GM12878 (cell line): ENCODE measurements at regions of chr6 and their contacts with region 1.

Region 1: DNA sequence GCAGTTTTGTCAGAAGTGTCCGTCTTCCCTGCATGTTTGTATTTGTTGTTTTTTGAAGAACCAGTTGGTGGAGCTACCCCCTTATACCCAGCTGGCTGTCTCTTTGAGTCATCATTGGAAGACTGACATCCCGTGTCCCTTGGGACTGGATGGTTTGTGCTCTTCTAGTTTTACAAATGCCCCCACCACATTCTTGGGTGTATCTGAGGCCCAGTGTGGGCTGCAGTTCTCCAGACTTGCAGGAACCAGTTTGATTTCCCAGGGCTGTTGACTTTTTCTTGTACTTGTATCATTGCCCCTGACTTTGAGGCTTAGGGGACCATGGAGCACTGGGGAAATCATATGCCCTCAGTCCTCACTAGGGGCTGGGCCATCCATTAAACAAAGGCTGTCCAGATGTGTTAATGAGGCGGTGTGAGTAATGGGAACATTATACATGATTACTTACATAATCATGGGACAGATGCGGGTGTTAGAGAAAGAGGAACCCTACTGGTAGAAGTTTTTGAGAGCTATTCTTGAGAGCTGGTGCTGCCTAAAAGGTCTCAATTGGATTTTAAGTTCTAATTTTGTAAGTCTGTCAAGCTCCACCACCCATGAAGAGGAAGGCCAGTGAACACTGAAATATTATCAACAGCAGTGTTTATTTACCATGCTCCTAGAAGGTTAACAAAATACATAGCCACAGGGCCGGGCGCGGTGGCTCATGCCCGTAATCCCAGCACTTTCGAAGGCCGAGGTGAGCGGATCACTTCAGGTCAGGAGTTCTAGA is 8.4 kb downstream of the JARID2 start:
- DNase-seq: peak; percentile 82
- ATAC-seq: peak; percentile 50
- H3K4me3 ChIP-seq: peak overlapping the region; percentile 42; the same call in 1 of the 2 replicates
- H3K27ac ChIP-seq: peak overlapping the region; percentile 92
- H3K4me1 ChIP-seq: peaks cover 78% of the 10 kb centered on the region
- H3K27me3 ChIP-seq: no peaks in the 10 kb centered on the region
- CTCF ChIP-seq: peak; percentile 40 to 65 (median 50); a peak in 5 of 6 replicates
- EP300 ChIP-seq: peak in 1 of 2 experiments; percentile 27; a peak in 1 of 4 replicates
- POLR2A ChIP-seq: no peak
- RAD21 ChIP-seq: peak; percentile 71

Region 2: DNA sequence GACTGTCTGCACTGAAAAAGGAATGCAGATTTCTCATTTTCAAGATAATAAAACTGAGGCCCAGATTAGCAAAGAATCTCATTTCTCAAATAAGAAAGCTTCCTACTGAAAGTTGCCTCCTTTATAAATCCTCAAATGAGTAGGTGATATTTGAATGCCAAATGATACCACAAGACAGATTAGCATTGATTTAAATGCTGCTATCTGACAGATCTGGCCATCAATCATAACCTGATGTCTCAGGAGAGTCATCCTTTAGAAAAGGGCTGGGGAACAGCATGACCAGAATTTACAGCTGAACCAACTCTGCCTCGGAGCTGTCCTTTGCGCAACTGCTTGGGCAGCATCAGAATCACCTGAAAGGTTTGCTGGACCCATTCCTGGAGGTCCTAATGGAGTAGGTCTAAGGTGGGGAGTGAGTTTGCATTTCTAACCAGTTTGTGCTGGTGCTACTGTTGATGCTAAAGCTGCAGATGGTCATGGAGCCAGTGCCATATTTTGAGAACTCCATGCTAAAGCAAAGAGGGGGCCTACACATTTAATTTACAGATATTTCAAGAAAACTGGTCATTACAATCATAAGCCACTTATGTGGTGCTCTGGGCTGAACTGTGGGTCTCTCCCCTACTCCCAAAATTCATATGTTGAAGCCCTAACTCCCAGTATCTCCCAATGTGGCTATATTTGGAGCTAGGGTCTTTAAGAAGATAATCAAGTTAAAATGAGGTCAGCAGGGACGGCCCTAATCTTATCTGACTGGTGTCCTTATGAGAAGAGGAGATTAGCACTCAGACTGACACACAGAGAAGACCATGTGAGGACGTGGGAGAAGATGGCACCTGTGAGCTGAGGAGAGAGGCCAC is 303.9 kb before region 1 on chr6:
- CTCF ChIA-PET with region 1: no interaction called
- POLR2A ChIA-PET with region 1: no interaction called
- RAD21 ChIA-PET with region 1: no interaction called
- SMC1A ChIA-PET with region 1: no interaction called
- in situ Hi-C with region 1: no loop called
- intact Hi-C with region 1: no loop called
- DNase-seq: no peak
- ATAC-seq: no peak
- H3K4me3 ChIP-seq: no peak overlapping the region
- H3K27ac ChIP-seq: no peak overlapping the region
- H3K4me1 ChIP-seq: peaks cover 4% of the 10 kb centered on the region
- H3K27me3 ChIP-seq: no peaks in the 10 kb centered on the region
- CTCF ChIP-seq: no peak
- EP300 ChIP-seq: no peak
- POLR2A ChIP-seq: no peak
- RAD21 ChIP-seq: no peak

Region 3: GRCh38 chr6:15218401-15218800 is 35.9 kb before region 1 on chr6:
- CTCF ChIA-PET with region 1: no interaction called
- POLR2A ChIA-PET with region 1: no interaction called
- RAD21 ChIA-PET with region 1: no interaction called
- SMC1A ChIA-PET with region 1: no interaction called
- in situ Hi-C with region 1: no loop called
- intact Hi-C with region 1: no loop called
- DNase-seq: no peak
- ATAC-seq: no peak
- H3K4me3 ChIP-seq: no peak overlapping the region
- H3K27ac ChIP-seq: no peak overlapping the region
- H3K4me1 ChIP-seq: no peaks in the 10 kb centered on the region
- H3K27me3 ChIP-seq: no peaks in the 10 kb centered on the region
- CTCF ChIP-seq: no peak
- EP300 ChIP-seq: no peak
- POLR2A ChIP-seq: no peak
- RAD21 ChIP-seq: no peak

Region 4: DNA sequence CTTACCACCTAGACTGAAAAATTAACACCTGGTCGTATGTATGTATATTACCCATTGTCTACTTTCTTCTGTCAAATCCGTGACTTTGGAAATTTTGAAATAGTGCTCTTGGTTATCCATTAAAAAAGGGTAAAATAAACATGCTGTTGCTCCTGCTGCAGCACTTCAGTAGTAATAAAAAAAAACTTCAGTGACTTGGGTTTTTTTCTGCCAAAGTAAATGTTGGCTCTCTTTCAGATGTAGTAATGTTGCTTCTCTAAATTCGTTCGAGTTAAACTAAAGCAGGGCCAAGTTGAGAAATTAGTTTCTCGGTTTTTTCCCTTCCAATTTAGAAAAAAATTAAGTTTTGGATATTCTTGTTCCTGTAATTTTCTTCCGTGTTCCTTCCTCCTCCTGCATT is 25.8 kb after region 1 on chr6:
- CTCF ChIA-PET with region 1: interaction called, 4 read pairs
- POLR2A ChIA-PET with region 1: interaction called, 6 read pairs
- RAD21 ChIA-PET with region 1: interaction called, 5 read pairs
- SMC1A ChIA-PET with region 1: interaction called, 16 read pairs
- in situ Hi-C with region 1: no loop called
- intact Hi-C with region 1: no loop called
- DNase-seq: no peak
- ATAC-seq: no peak
- H3K4me3 ChIP-seq: peak overlapping the region; percentile 40; the same call in 1 of the 2 replicates
- H3K27ac ChIP-seq: peak overlapping the region; percentile 37; the same call in 1 of the 2 replicates
- H3K4me1 ChIP-seq: peaks cover 50% of the 10 kb centered on the region
- H3K27me3 ChIP-seq: no peaks in the 10 kb centered on the region
- CTCF ChIP-seq: no peak
- EP300 ChIP-seq: no peak
- POLR2A ChIP-seq: no peak
- RAD21 ChIP-seq: no peak

Region 5: GRCh38 chr6:15305496-15305895 is 51.2 kb after region 1 on chr6:
- CTCF ChIA-PET with region 1: interaction called, 10 read pairs
- POLR2A ChIA-PET with region 1: interaction called, 8 read pairs
- RAD21 ChIA-PET with region 1: interaction called, 29 read pairs
- SMC1A ChIA-PET with region 1: interaction called, 32 read pairs
- in situ Hi-C with region 1: no loop called
- intact Hi-C with region 1: loop called (anchors 2 kb)
- DNase-seq: no peak
- ATAC-seq: peak; percentile 67
- H3K4me3 ChIP-seq: peak overlapping the region; percentile 37; the same call in 1 of the 2 replicates
- H3K27ac ChIP-seq: peak overlapping the region; percentile 87
- H3K4me1 ChIP-seq: peaks cover 68% of the 10 kb centered on the region
- H3K27me3 ChIP-seq: no peaks in the 10 kb centered on the region
- CTCF ChIP-seq: no peak
- EP300 ChIP-seq: peak in 1 of 2 experiments; percentile 55; a peak in 2 of 4 replicates
- POLR2A ChIP-seq: no peak
- RAD21 ChIP-seq: no peak

Region 6: DNA sequence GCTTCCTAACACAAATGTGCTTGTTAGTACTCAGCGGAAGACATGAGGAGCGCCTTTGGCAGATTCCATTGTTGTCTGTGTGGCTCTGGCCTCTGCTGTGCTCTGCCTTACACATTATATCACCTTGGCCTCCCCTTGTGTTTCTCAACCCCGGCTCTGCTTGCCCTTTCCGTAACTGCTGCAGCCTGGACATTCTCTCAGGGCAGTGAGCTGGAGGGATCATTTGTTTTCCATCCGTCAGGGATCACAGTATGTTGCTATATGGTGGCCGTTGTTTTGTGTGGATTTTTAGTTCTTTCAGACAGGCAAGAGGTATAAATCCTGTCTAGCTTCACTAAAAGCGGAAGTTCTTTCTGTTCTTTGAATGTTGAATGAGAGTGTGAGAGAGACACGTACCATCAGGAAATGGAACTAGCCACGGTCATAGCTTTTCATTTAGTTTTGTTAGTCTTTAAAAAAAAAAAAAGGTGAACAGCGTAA is 166.7 kb after region 1 on chr6:
- CTCF ChIA-PET with region 1: interaction called, 3 read pairs
- POLR2A ChIA-PET with region 1: interaction called, 6 read pairs
- RAD21 ChIA-PET with region 1: interaction called, 10 read pairs
- SMC1A ChIA-PET with region 1: interaction called, 8 read pairs
- in situ Hi-C with region 1: no loop called
- intact Hi-C with region 1: no loop called
- DNase-seq: no peak
- ATAC-seq: peak; percentile 88
- H3K4me3 ChIP-seq: peak overlapping the region; percentile 59
- H3K27ac ChIP-seq: peak overlapping the region; percentile 90
- H3K4me1 ChIP-seq: peaks cover 29% of the 10 kb centered on the region
- H3K27me3 ChIP-seq: no peaks in the 10 kb centered on the region
- CTCF ChIP-seq: no peak
- EP300 ChIP-seq: 0 out of 4 replicates have a peak, but pooled peaks of 1 of the 2 experiments have one; percentile 9
- POLR2A ChIP-seq: no peak
- RAD21 ChIP-seq: no peak

Region 7: DNA sequence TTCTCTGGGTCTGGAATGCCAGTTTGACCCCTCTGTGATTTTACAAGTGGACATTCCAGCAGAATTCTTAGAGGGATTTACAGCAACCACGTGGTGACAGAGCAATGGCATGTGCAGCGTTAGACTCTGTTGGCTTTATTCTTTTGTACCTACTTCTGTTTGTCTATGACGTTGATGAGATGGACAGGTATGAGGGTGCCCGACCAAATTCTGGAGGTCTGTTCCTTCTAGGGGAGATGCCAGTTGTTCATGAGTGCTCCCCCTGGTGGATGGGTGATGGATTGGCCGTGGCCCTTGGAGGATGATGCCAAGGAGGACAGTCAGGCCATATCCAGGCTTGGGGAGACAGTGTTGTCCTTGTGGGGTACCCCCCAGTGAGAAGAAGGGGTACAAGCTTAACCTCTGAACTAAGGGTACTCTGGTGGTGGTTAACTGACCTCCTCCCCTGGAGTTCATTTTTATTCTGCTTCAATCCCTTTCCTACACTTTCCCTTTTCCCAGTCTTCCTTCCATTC is 210.0 kb after region 1 on chr6:
- CTCF ChIA-PET with region 1: interaction called, 11 read pairs
- POLR2A ChIA-PET with region 1: no interaction called
- RAD21 ChIA-PET with region 1: interaction called, 4 read pairs
- SMC1A ChIA-PET with region 1: interaction called, 9 read pairs
- in situ Hi-C with region 1: no loop called
- intact Hi-C with region 1: no loop called
- DNase-seq: no peak
- ATAC-seq: peak; percentile 95
- H3K4me3 ChIP-seq: no peak overlapping the region
- H3K27ac ChIP-seq: no peak overlapping the region
- H3K4me1 ChIP-seq: no peaks in the 10 kb centered on the region
- H3K27me3 ChIP-seq: no peaks in the 10 kb centered on the region
- CTCF ChIP-seq: peak; percentile 60 to 78 (median 72)
- EP300 ChIP-seq: no peak
- POLR2A ChIP-seq: no peak
- RAD21 ChIP-seq: peak; percentile 51